Heart right ventricle (tissue), 16 donors: ENCODE measurements at regions of chr12 and their contacts with region 1.

Region 1: DNA sequence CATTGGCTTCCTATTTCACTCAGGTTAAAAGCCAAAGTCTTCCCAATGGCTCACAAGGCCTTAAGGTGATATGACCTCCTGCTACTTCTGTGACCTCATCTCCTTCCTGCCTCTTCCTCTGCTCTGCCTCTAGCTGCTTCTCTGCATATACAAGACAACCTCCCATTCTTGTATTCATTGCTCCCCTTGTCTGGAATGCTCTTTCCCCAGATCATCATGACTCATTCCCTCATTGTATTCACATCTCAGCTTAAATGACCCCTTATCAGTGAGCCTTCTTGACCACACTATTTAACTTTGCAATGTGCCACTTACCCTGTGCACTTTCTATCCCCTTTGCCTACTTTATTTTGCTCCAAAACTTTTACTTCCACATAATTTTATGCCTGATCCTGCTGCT is 90.2 kb downstream of the PPP1R12A start:
- DNase-seq: no peak
- ATAC-seq: peak in 2 of 8 donors; percentile 19 to 51
- H3K4me3 ChIP-seq: no peak overlapping the region
- H3K27ac ChIP-seq: peak overlapping the region in 1 of 10 donors; percentile 10
- H3K4me1 ChIP-seq: peaks cover 0 to 64% (median 38%) of the 10 kb centered on the region in 9 donors
- H3K27me3 ChIP-seq: no peaks in the 10 kb centered on the region
- CTCF ChIP-seq: no peak

Region 2: GRCh38 chr12:79811351-79811750 is 33.3 kb before region 1 on chr12:
- intact Hi-C with region 1: loop called in 1 of 10 experiments (anchors 1 kb)
- DNase-seq: no peak
- ATAC-seq: no peak
- H3K4me3 ChIP-seq: no peak overlapping the region
- H3K27ac ChIP-seq: no peak overlapping the region
- H3K4me1 ChIP-seq: peaks cover 0 to 16% (median 0%) of the 10 kb centered on the region in 9 donors
- H3K27me3 ChIP-seq: no peaks in the 10 kb centered on the region
- CTCF ChIP-seq: peak in 2 of 9 donors; percentile 17 to 21